ENCODE measurements at regions of chr19 and their contacts with region 1.

Region 1: GRCh38 chr19:11597202-11598102 is at the start of gene ZNF627:
- DNase-seq: peak; percentile 100
- ATAC-seq: peak; percentile 100
- H3K4me3 Mint-ChIP-seq: peak within 1 kb of the TSS; percentile 88
- H3K27ac Mint-ChIP-seq: peak within 1 kb of the TSS; percentile 89
- H3K4me1 Mint-ChIP-seq: peaks cover 30% of the 10 kb centered on the region
- H3K27me3 Mint-ChIP-seq: no peaks in the 10 kb centered on the region
- CTCF ChIP-seq: peak; percentile 5
- total RNA-seq, gene ZNF627: 6.1 to 6.5 TPM

Region 2: DNA sequence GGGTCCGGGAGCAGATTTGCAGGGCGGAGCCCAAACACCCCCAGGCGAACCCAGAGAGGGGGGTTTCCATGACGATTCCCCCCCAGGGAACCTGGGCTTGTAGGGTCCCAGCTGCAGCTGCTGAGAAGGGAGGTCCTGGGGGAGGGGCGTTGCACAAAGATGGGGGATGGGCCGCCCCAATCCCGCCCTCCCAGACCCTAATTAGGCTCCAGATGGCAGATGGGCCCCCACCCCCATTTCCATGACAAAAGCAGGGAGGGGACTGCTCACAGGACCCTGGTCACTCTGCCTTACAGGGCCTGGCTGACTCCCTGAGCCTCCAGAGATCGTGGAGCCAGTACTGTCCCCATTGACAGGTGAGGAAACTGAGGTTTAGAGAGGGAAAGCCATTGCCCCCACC is 131.8 kb before region 1 on chr19:
- CTCF ChIA-PET with region 1: no interaction called
- POLR2A ChIA-PET with region 1: no interaction called
- intact Hi-C with region 1: no loop called
- DNase-seq: no peak
- ATAC-seq: no peak
- H3K4me3 Mint-ChIP-seq: no peak overlapping the region
- H3K27ac Mint-ChIP-seq: no peak overlapping the region
- H3K4me1 Mint-ChIP-seq: no peaks in the 10 kb centered on the region
- H3K27me3 Mint-ChIP-seq: peaks cover 2% of the 10 kb centered on the region
- CTCF ChIP-seq: no peak

Region 3: GRCh38 chr19:11528551-11529341 is 68.7 kb before region 1 on chr19 and contains the start of gene ECSIT:
- CTCF ChIA-PET with region 1: no interaction called
- POLR2A ChIA-PET with region 1: interaction called, 3 read pairs
- intact Hi-C with region 1: loop called (anchors 5 kb)
- DNase-seq: peak; percentile 98
- ATAC-seq: peak; percentile 98
- H3K4me3 Mint-ChIP-seq: peak within 1 kb of the TSS; percentile 97
- H3K27ac Mint-ChIP-seq: peak within 1 kb of the TSS; percentile 94
- H3K4me1 Mint-ChIP-seq: peaks cover 26% of the 10 kb centered on the region
- H3K27me3 Mint-ChIP-seq: no peaks in the 10 kb centered on the region
- CTCF ChIP-seq: no peak
- total RNA-seq, gene ECSIT: 51.2 to 53.9 TPM